ENCODE measurements at regions of chr1 and their contacts with region 1.

Region 1: DNA sequence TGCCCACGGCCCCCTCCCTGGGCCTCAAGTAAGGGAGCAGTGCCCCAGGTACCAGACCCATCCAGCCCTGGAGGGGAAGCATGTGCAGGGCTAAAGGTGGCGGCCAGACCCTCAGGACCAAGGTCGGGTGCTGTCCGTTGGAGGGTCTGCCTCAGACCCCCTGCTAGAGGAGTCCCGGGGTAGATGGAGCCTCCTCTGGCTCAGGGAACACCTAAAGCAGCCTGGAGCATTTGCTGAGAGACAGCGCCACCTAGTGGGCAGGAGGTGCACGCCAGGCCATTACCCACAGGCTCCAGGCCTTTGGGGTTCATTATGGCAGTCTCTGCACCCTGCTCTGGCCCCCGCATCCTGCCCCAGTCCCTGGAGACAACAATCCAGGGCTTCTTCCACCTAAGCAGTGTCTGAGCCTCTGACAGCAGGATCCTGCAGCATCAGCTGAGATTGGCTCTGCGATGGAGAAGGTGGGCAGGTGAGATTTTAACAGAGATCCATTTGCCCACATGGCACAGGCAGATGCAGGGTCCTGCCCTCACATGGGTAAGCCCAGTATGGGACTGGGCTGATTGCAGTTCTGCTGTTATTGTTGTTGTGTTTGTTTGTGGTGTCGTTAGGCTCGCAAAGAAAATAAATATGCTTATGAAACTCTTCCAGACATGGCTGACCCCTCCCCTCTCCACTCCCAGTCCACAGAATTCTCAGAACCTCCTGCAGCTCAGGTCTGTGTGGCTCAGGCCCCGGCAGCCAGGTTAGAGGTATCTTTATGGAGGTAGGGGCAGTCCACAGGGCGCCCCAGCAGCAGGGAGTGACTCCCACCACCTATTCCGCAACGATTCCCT is 42.4 kb downstream of the CTNNBIP1 start:
- DNase-seq: peak; percentile 88
- H3K4me3 ChIP-seq: no peak overlapping the region
- H3K27ac ChIP-seq: no peak overlapping the region
- H3K4me1 ChIP-seq: no peaks in the 10 kb centered on the region
- H3K27me3 ChIP-seq: no peaks in the 10 kb centered on the region
- CTCF ChIP-seq: peak; percentile 96 to 98 (median 97)
- EP300 ChIP-seq: no peak
- POLR2A ChIP-seq: no peak

Region 2: GRCh38 chr1:9629445-9630201 is 238.0 kb before region 1 on chr1:
- in situ Hi-C with region 1: loop called in 1 of 4 experiments (anchors 10 kb)
- intact Hi-C with region 1: loop called (anchors 2 kb)
- DNase-seq: peak; percentile 67
- H3K4me3 ChIP-seq: peak overlapping the region in 1 of 4 donors; percentile 27
- H3K27ac ChIP-seq: peak overlapping the region; percentile 40 to 67 (median 54)
- H3K4me1 ChIP-seq: peaks cover 0 to 14% (median 4%) of the 10 kb centered on the region in 4 donors
- H3K27me3 ChIP-seq: peaks cover 4% of the 10 kb centered on the region
- CTCF ChIP-seq: no peak
- EP300 ChIP-seq: no peak
- POLR2A ChIP-seq: no peak

Region 3: DNA sequence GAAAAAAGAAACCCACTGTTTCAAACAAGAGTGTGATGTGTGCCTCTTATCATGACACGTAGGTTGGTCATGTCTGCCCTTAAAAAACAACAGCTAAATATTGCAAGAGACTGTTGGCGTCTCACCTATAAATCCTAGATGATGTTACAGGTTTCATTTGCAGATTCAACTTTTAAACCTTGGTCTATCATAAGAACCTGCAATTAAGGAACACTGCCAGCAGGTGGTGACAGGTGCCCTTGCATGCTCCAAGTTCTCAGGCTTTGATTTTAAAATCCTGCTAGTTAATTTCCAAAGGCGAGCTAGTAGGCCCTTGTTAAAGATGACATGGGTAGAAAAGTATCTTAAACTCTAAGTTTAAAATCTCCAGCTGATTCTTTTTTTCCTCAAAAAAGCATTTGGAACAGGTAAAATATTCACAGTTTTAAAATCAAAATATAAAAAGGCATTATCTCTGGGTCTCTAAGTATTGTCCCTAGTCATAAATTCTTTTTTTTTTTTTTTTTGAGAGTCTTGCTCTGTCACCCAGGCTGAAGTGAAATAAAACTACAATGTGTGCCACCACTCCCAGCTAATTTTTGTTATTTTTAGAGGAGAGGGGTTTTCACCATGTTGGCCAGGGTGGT is 83.0 kb before region 1 on chr1:
- in situ Hi-C with region 1: loop called in 3 of 4 experiments (anchors 5 to 10 kb)
- intact Hi-C with region 1: loop called (anchors 5 kb)
- DNase-seq: peak; percentile 72
- H3K4me3 ChIP-seq: no peak overlapping the region
- H3K27ac ChIP-seq: no peak overlapping the region
- H3K4me1 ChIP-seq: peaks cover 0 to 35% (median 4%) of the 10 kb centered on the region in 4 donors
- H3K27me3 ChIP-seq: no peaks in the 10 kb centered on the region
- CTCF ChIP-seq: peak; percentile 61 to 88 (median 70)
- EP300 ChIP-seq: no peak
- POLR2A ChIP-seq: no peak

Region 4: DNA sequence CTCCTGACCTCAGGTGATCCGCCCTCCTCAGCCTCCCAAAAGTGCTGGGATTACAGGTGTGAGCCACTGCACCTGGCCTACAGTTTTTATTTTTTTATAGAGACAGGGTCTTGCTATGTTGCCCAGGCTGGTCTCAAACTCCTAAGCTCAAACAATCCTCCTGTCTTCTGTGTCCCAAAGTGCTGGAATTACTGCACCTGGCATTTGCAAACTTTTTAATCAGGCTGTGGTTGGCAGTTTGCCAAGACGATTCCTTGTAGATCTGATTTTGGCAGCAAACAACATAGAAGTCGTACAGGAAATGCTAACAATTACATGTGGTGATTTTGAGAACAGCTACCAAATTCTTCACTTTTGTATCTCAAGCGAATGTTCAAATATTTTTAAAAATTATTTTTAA is 139.5 kb after region 1 on chr1:
- in situ Hi-C with region 1: no loop called
- intact Hi-C with region 1: no loop called
- DNase-seq: no peak
- H3K4me3 ChIP-seq: no peak overlapping the region
- H3K27ac ChIP-seq: no peak overlapping the region
- H3K4me1 ChIP-seq: no peaks in the 10 kb centered on the region
- H3K27me3 ChIP-seq: peaks cover 6% of the 10 kb centered on the region
- CTCF ChIP-seq: no peak
- EP300 ChIP-seq: no peak
- POLR2A ChIP-seq: no peak

Measured in transverse colon (tissue), 4 donors.